HepG2 (cell line): ENCODE measurements at regions of chr10 and their contacts with region 1.

Region 1: DNA sequence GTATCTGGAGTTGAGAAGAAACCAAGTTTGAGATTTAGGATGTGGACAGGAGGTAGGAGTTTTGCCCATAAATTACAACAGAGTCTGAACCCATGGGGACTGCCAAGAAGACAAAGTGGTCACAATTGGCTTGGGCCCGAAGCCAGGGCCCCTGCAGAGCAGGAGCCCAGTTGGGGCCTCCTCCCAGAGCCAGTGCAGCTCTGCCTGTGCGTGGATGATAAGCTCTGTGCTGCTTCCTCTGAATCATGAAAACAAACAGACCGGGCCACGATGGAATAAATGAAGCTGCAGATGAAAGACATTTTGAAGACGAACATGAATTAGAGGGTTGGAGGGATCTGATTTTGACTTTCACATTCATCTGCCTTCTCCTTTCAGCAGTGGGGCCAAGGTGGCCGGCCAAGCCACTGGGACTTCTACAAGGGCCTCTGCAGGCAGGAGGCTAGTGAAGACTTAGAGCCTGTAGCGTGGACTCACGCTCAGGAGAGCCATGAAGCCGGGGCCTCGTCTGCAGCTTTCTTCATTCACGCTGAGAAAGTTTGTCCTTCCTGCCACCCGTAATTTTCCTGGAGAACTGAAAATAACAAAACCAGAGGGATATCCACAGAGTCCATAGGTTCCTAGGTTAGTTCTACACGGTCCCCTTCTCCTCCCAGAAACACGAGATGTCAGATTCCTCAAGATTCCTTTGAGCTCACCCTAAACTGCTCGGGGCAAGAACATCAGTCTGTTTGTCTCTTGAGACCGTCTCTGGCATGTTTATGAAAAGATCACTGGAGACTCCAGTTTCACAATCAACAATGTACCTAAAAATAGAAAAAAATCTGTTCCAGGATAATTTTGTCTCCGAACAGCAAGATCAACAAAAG is 156.7 kb upstream of the LYZL1 start:
- DNase-seq: peak; percentile 36
- ATAC-seq: peak; percentile 43; the same call in 1 of the 3 replicates
- H3K4me3 ChIP-seq: no peak overlapping the region
- H3K27ac ChIP-seq: no peak overlapping the region
- H3K4me1 ChIP-seq: peaks cover 26% of the 10 kb centered on the region; the same call in 1 of the 2 replicates
- H3K27me3 ChIP-seq: peaks cover 0 to 5% of the 10 kb centered on the region in 2 experiments; a peak in 2 of 5 replicates
- CTCF ChIP-seq: no peak
- EP300 ChIP-seq: no peak
- POLR2A ChIP-seq: no peak
- RAD21 ChIP-seq: no peak

Region 2: GRCh38 chr10:28628184-28628893 is 503.8 kb before region 1 on chr10:
- CTCF ChIA-PET with region 1: interaction called, 11 read pairs
- POLR2A ChIA-PET with region 1: no interaction called
- in situ Hi-C with region 1: no loop called
- intact Hi-C with region 1: no loop called
- DNase-seq: peak; percentile 62
- ATAC-seq: peak; percentile 87
- H3K4me3 ChIP-seq: no peak overlapping the region
- H3K27ac ChIP-seq: no peak overlapping the region
- H3K4me1 ChIP-seq: peaks cover 16% of the 10 kb centered on the region
- H3K27me3 ChIP-seq: peaks cover 0 to 4% of the 10 kb centered on the region in 2 experiments; a peak in 1 of 5 replicates
- CTCF ChIP-seq: peak; percentile 92
- EP300 ChIP-seq: no peak
- POLR2A ChIP-seq: no peak
- RAD21 ChIP-seq: peak; percentile 84

Region 3: DNA sequence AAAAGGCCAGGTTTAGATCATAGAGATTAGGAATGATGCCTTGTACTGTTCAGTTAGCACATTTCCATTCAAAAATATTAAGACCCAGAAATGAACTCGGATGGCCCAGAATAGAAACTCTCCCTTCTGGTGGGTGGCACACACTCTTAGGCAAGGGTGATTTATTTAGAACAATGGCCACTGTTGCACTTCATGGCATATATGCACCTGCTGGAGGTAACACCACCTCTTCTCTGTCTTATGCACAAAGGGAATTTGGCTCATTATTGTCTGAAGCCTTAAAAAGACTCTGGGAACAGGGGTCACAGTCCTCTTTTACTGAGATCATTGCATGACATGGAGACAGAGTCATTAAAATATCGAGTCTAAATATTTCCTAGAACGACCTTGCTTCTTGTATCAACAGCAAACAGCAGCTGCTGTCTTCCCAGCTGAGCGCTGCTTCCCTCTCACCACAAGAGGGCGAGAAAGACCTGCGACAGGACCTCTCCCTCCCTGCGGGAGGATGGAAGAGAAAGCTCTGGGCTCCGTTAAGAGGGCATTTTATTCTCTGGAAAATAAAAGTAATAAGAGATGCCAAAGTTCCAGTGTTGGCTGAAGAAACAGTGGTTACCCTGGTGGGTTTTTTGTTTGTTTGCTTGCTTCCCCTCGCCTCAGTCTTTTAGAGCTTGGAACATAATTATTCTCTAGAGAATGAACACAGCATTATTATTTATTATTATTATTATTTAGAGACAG is 468.4 kb before region 1 on chr10:
- CTCF ChIA-PET with region 1: interaction called, 23 read pairs
- POLR2A ChIA-PET with region 1: no interaction called
- in situ Hi-C with region 1: loop called (anchors 5 kb)
- intact Hi-C with region 1: loop called (anchors 1 kb)
- DNase-seq: peak; percentile 77
- ATAC-seq: peak; percentile 94
- H3K4me3 ChIP-seq: no peak overlapping the region
- H3K27ac ChIP-seq: no peak overlapping the region
- H3K4me1 ChIP-seq: peaks cover 18% of the 10 kb centered on the region
- H3K27me3 ChIP-seq: peaks cover 4 to 34% of the 10 kb centered on the region in 2 experiments
- CTCF ChIP-seq: peak; percentile 91
- EP300 ChIP-seq: no peak
- POLR2A ChIP-seq: no peak
- RAD21 ChIP-seq: peak; percentile 90

Region 4: DNA sequence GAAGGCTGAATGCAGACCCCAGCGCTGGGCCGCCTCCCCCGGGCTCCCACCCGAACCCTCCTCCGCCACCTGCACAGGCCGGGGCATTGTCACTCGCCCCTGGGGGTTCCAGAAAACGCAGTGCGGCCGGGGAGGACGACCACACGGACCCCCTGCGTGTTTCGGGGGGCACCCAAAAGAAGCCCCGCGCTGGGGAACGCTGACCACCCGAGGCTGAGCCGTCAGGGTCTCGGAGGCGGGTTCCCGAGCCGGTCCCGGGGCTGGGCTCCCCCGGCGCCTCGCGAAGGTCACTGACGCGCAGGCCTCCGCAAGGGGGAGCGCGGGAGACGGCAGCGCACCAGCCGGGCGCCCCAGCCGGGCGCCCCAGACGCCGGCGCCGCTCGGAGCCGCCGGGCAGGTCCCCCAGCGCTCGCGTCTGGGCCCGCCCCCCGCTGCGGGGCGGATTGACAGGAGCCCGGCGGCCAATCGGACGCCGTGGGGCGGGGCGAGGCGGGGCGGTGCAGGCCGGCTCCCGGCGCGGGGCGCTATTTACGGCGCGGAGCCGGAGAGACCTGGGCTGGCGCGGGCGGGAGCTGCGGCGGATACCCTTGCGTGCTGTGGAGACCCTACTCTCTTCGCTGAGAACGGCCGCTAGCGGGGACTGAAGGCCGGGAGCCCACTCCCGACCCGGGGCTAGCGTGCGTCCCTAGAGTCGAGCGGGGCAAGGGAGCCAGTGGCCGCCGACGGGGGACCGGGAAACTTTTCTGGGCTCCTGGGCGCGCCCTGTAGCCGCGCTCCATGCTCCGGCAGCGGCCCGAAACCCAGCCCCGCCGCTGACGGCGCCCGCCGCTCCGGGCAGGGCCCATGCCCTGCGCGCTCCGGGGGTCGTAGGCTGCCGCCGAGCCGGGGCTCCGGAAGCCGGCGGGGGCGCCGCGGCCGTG is 455.0 kb before region 1 on chr10 and contains the start of gene BAMBI:
- CTCF ChIA-PET with region 1: interaction called, 15 read pairs
- POLR2A ChIA-PET with region 1: no interaction called
- in situ Hi-C with region 1: no loop called
- intact Hi-C with region 1: loop called (anchors 1 kb)
- DNase-seq: peak; percentile 81
- ATAC-seq: peak; percentile 93
- H3K4me3 ChIP-seq: peak within 1 kb of the TSS; percentile 93 to 99 (median 99)
- H3K27ac ChIP-seq: peak within 1 kb of the TSS; percentile 71
- H3K4me1 ChIP-seq: peaks cover 30% of the 10 kb centered on the region
- H3K27me3 ChIP-seq: peaks cover 0 to 31% of the 10 kb centered on the region in 2 experiments; a peak in 4 of 5 replicates
- CTCF ChIP-seq: peak; percentile 73
- EP300 ChIP-seq: peak in 1 of 2 experiments; percentile 5; a peak in 1 of 4 replicates
- POLR2A ChIP-seq: peak; percentile 97 to 98
- RAD21 ChIP-seq: peak; percentile 97
- total RNA-seq, gene BAMBI: 13.2 and 23.6 TPM in 2 replicates

Region 5: DNA sequence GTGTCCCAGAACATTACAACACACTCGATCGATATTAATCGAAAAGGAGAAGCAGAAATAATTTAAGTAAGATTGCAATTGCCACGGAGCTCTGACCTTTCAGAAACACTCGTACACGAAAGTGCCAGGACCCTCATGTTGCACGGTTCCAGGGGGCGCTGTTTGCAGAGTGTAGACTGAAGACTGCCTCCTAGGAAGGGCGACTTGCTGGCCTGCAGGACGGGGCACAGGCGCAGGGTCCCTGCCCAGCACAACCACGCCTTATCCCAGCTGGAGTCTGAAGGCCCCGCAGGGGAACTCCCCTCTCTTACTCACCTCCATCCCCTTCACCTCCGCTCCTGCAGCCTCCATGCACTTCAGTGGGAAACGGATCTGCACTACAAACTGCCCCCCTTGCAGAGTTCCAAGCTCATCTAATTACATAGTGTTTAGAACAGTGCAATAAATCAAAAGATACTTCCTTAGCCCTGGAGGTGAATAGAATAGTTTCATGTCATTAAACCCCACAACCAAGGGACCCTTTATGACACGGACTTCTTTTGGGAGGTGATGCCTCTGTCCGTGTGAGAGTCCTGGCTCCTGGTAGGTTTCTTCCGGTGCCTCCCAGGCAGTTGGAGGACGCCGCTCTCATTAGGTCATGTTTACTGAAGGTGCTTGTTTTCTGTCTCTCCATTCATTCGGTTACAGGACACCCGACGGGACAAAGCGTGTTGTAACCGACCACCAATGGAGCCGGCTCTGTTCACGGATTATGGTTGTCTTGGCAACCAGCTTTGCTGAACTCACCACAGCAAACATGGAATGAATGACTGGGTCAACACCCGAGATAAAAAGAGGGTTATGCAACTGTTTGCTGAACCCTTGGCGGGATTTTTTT is 192.7 kb before region 1 on chr10:
- CTCF ChIA-PET with region 1: interaction called, 3 read pairs
- POLR2A ChIA-PET with region 1: no interaction called
- in situ Hi-C with region 1: no loop called
- intact Hi-C with region 1: loop called (anchors 5 kb)
- DNase-seq: peak; percentile 100
- ATAC-seq: peak; percentile 97
- H3K4me3 ChIP-seq: peak overlapping the region; percentile 53 to 80 (median 67)
- H3K27ac ChIP-seq: peak overlapping the region; percentile 99
- H3K4me1 ChIP-seq: peaks cover 56% of the 10 kb centered on the region
- H3K27me3 ChIP-seq: no peaks in the 10 kb centered on the region; a peak in 1 of 5 replicates
- CTCF ChIP-seq: peak; percentile 92
- EP300 ChIP-seq: peak; percentile 99 to 100
- POLR2A ChIP-seq: peak; percentile 66 to 85
- RAD21 ChIP-seq: peak; percentile 60

Region 6: GRCh38 chr10:29304264-29305030 is 172.3 kb after region 1 on chr10:
- CTCF ChIA-PET with region 1: interaction called, 7 read pairs
- POLR2A ChIA-PET with region 1: no interaction called
- in situ Hi-C with region 1: no loop called
- intact Hi-C with region 1: loop called (anchors 1 kb)
- DNase-seq: peak; percentile 68
- ATAC-seq: peak; percentile 82
- H3K4me3 ChIP-seq: peak overlapping the region in 2 of 3 experiments; percentile 27 to 46; a peak in 3 of 6 replicates
- H3K27ac ChIP-seq: no peak overlapping the region
- H3K4me1 ChIP-seq: peaks cover 10% of the 10 kb centered on the region; the same call in 1 of the 2 replicates
- H3K27me3 ChIP-seq: no peaks in the 10 kb centered on the region
- CTCF ChIP-seq: peak; percentile 86
- EP300 ChIP-seq: no peak
- POLR2A ChIP-seq: no peak
- RAD21 ChIP-seq: peak; percentile 84